Activated CD4-positive, alpha-beta T cell treated with anti-CD3 and anti-CD28 coated beads for 36 hours (primary cell): ENCODE measurements at regions of chr18 and their contacts with region 1.

Region 1: GRCh38 chr18:3472681-3473544 is 22.9 kb downstream of the TGIF1 start:
- DNase-seq: peak; percentile 23
- ATAC-seq: peak; percentile 89
- H3K4me3 Mint-ChIP-seq: no peak overlapping the region
- H3K27ac Mint-ChIP-seq: no peak overlapping the region
- H3K4me1 Mint-ChIP-seq: peaks cover 12% of the 10 kb centered on the region
- H3K27me3 Mint-ChIP-seq: peaks cover 2% of the 10 kb centered on the region

Region 2: DNA sequence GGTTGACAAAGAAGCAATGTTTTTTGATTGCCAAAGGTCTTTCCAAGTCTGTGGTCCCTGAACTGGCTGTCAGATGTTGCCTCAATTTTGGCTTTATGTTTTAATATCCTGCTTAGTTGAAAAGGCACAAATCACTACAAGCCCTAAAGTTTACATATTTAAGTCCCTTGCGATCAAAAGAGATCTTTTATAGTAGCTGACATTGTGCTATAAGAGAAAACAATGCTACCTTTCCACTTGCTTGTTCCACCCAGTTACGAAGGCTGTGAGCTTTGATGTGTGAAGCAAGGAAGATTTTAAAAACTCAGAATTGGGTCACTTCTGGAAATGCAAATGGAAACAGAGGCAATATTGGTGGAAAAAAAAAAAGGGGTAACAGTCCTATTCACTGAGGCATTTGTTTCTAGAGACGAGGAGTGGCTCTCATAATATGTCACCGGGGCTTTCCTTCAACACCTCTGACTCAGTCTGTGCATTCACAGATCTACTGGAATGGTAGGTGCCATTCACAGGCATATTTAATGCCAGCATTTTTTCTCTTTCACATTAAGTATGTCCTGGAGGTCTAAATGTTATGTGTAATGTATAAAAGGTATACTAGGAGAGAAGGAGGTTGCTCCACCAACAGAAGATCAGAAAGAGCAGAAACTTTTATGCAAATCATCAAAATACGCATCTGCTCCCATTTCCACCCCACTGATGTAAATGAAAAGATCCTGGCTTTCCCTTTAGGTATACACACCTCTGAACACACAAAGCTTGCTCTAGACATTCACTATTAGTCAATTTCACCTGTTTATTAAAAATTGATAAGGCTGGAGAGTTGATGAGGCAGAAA is 68.9 kb after region 1 on chr18:
- CTCF ChIA-PET with region 1: no interaction called
- POLR2A ChIA-PET with region 1: no interaction called
- intact Hi-C with region 1: loop called in 1 of 2 experiments (anchors 1 kb)
- DNase-seq: peak; percentile 65
- ATAC-seq: peak; percentile 96
- H3K4me3 Mint-ChIP-seq: peak overlapping the region; percentile 16
- H3K27ac Mint-ChIP-seq: peak overlapping the region; percentile 74
- H3K4me1 Mint-ChIP-seq: peaks cover 32% of the 10 kb centered on the region
- H3K27me3 Mint-ChIP-seq: peaks cover 2% of the 10 kb centered on the region